ENCODE measurements at regions of chr5 and their contacts with region 1.

Region 1: GRCh38 chr5:10863763-10864383 is 102.8 kb upstream of the DAP start:
- DNase-seq: no peak
- H3K4me3 ChIP-seq: no peak overlapping the region
- CTCF ChIP-seq: peak; percentile 82

Region 2: GRCh38 chr5:10452768-10453331 is 411.0 kb before region 1 on chr5:
- in situ Hi-C with region 1: loop called (anchors 25 kb)
- DNase-seq: peak; percentile 83
- H3K4me3 ChIP-seq: no peak overlapping the region
- CTCF ChIP-seq: peak; percentile 71

Region 3: DNA sequence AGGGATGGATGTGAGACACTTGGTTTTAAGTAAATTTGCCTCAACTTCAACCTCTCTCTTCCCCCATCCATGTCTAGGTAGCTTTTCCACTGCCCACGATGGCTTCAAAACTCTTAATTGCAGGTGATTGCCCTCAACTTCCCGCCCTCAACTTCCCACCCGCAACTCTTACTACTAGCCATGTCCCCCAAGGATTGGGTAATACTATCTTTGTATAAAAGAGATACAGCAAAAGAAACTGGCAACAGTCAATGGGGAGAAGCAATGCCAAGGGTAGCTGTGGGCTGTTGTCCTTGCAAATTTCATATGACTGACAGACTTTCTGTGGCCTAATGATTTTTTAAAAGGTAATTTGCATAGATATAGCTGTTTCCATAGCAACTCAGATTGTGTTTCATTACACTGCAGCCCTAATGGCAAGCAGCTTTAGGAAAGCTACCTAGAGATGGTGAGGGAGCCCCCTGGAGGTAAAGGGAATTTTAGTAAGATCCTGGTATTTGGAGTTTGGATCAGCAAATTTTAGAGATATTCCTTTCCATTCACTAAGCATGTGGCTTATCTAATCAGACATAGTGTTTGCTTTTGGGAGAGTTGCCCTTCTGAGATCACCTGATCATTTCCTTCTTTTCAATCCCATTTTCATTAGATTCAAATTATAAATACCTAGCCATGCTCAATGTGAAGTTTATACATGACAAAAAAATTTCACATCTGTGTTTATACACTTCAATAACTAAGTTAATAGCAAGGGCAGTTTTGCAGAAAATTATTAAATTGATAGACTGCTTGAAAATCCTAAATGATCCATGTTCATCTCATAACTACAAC is 318.8 kb after region 1 on chr5:
- in situ Hi-C with region 1: loop called (anchors 25 kb)
- DNase-seq: peak; percentile 48
- H3K4me3 ChIP-seq: no peak overlapping the region
- CTCF ChIP-seq: peak; percentile 77

Measured in astrocyte of the cerebellum (primary cell).